Esophagus squamous epithelium (tissue), 5 donors: ENCODE measurements at regions of chr10 and their contacts with region 1.

Region 1: DNA sequence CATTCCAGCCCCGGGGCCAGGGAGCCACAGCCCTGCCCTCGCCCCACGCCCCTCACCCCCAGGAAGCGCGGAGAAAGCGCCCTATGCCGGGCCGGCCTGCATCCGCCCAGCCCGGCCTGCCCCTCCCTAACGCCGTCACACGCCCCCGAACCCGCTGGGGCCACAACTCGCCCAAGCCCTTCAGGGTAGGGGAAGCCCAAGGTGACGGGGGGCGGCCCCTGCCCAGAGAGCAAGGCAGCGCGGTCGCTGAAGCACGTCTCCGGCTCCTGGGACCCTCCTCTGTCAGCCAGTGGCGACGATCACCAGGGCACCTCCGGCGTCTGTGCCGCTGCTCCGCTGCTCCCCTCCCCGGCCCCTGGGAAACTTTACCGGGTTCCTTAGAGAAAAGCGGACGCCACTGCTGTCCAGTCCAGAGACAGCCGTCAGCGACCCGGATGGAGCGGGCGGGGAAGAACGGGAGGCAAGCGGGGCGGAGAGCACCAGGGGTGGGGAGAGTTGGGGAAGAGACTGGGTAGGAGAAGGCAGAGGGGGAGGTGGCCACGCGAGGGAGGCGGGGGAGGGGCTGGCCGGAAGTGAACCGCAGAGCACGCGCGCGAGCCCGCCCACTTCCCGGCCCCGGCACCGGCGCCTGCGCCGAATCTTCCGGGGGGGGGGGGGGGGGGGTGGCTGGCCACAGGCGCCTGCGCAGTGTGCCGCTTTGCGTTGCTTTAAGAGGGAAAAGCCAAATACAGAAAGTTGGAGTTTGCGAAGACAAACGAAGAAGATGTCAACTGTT is at the start of gene HERC4:
- DNase-seq: peak; percentile 69
- H3K4me3 ChIP-seq: peak within 1 kb of the TSS; percentile 82 to 99 (median 92)
- H3K27ac ChIP-seq: peak within 1 kb of the TSS; percentile 98 to 99 (median 99)
- H3K4me1 ChIP-seq: peaks cover 8 to 43% (median 20%) of the 10 kb centered on the region in 3 donors
- H3K27me3 ChIP-seq: no peaks in the 10 kb centered on the region
- CTCF ChIP-seq: no peak
- POLR2A ChIP-seq: peak in 2 of 4 donors; percentile 70 to 85
- total RNA-seq, gene HERC4: 23.6 to 47.5 (median 35.0) TPM

Region 2: GRCh38 chr10:67849331-67850011 is 225.5 kb before region 1 on chr10:
- intact Hi-C with region 1: loop called (anchors 10 kb)
- DNase-seq: peak; percentile 67
- H3K4me3 ChIP-seq: peak overlapping the region; percentile 60 to 92 (median 86)
- H3K27ac ChIP-seq: peak overlapping the region; percentile 86 to 97 (median 95)
- H3K4me1 ChIP-seq: peaks cover 0 to 10% (median 5%) of the 10 kb centered on the region in 3 donors
- H3K27me3 ChIP-seq: no peaks in the 10 kb centered on the region
- CTCF ChIP-seq: peak in 3 of 6 experiments; percentile 11 to 23 (median 14)
- POLR2A ChIP-seq: peak in 1 of 4 donors; percentile 67

Region 3: GRCh38 chr10:67884313-67884841 is 190.6 kb before region 1 on chr10 and contains the start of gene SIRT1:
- intact Hi-C with region 1: loop called (anchors 10 kb)
- DNase-seq: peak; percentile 88
- H3K4me3 ChIP-seq: peak within 1 kb of the TSS; percentile 59 to 92 (median 86)
- H3K27ac ChIP-seq: peak within 1 kb of the TSS; percentile 95 to 99 (median 96)
- H3K4me1 ChIP-seq: peaks cover 0 to 32% (median 13%) of the 10 kb centered on the region in 3 donors
- H3K27me3 ChIP-seq: no peaks in the 10 kb centered on the region
- CTCF ChIP-seq: peak in 1 of 6 experiments; percentile 10
- POLR2A ChIP-seq: peak in 3 of 4 donors; percentile 66 to 97 (median 96)
- total RNA-seq, gene SIRT1: 7.4 to 19.8 (median 7.7) TPM